CD4-positive, alpha-beta T cell (primary cell): ENCODE measurements at regions of chr2 and their contacts with region 1.

Region 1: GRCh38 chr2:25460261-25460905 is 118.7 kb upstream of the DNMT3A start:
- DNase-seq: no peak
- ATAC-seq: no peak
- H3K4me3 ChIP-seq: no peak overlapping the region
- H3K4me3 Mint-ChIP-seq: no peak overlapping the region
- H3K27ac ChIP-seq: no peak overlapping the region
- H3K27ac Mint-ChIP-seq: no peak overlapping the region
- H3K4me1 ChIP-seq: no peaks in the 10 kb centered on the region
- H3K4me1 Mint-ChIP-seq: no peaks in the 10 kb centered on the region
- H3K27me3 ChIP-seq: no peaks in the 10 kb centered on the region
- H3K27me3 Mint-ChIP-seq: no peaks in the 10 kb centered on the region
- CTCF ChIP-seq: no peak

Region 2: GRCh38 chr2:25512707-25513106 is 52.3 kb after region 1 on chr2:
- CTCF ChIA-PET with region 1: no interaction called
- POLR2A ChIA-PET with region 1: no interaction called
- intact Hi-C with region 1: loop called in 1 of 2 experiments (anchors 1 kb)
- DNase-seq: no peak
- ATAC-seq: no peak
- H3K4me3 ChIP-seq: no peak overlapping the region
- H3K4me3 Mint-ChIP-seq: no peak overlapping the region
- H3K27ac ChIP-seq: no peak overlapping the region
- H3K27ac Mint-ChIP-seq: no peak overlapping the region
- H3K4me1 ChIP-seq: no peaks in the 10 kb centered on the region
- H3K4me1 Mint-ChIP-seq: no peaks in the 10 kb centered on the region
- H3K27me3 ChIP-seq: no peaks in the 10 kb centered on the region
- H3K27me3 Mint-ChIP-seq: no peaks in the 10 kb centered on the region
- CTCF ChIP-seq: no peak